ENCODE measurements at regions of chr4 and their contacts with region 1.

Region 1: DNA sequence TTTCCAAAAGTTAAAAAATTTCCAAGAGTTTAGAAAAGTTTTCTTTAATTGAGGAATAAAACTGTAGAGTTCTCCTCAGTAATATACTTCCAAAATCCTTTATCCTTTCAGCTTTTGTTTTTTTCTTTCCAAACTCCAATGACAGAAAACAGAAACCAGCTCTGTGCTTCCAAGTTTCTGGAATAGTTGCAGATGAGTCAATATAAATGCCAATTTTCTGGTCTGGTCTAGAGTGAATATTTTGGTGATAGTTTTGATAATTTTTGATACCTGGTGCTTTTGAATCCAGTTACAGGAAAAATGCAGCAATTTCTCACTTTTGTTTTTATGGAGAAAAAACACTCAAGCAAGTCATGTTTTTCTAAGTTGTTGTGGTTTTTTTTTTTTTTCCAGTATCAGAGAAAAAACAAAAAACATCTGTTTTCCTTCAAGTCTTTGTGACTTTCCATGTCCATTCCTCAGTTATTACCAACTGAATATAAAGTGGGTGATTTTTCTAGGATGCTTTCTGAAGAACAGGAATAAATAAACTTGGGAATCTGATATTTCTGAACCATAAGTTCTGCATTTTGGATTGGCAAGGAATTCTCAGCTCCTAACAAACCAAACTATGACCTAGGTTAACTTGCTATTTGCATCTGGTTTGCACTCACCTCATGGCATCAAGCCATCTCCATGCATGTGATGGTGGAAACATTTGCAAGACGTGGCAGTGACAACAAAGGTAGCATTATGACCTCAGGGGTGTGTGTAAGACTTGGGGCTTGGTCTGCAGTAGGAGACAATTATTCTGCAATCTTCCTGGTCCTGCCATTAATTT is 139.1 kb downstream of the VEGFC start:
- DNase-seq: no peak
- H3K4me3 Mint-ChIP-seq: no peak overlapping the region
- H3K27ac Mint-ChIP-seq: no peak overlapping the region
- H3K4me1 Mint-ChIP-seq: no peaks in the 10 kb centered on the region
- H3K27me3 Mint-ChIP-seq: no peaks in the 10 kb centered on the region
- CTCF ChIP-seq: no peak

Region 2: GRCh38 chr4:176856421-176856820 is 202.8 kb after region 1 on chr4:
- CTCF ChIA-PET with region 1: no interaction called
- intact Hi-C with region 1: no loop called
- DNase-seq: no peak
- H3K4me3 Mint-ChIP-seq: no peak overlapping the region
- H3K27ac Mint-ChIP-seq: no peak overlapping the region
- H3K4me1 Mint-ChIP-seq: no peaks in the 10 kb centered on the region
- H3K27me3 Mint-ChIP-seq: no peaks in the 10 kb centered on the region
- CTCF ChIP-seq: no peak

Region 3: GRCh38 chr4:177163532-177163931 is 509.9 kb after region 1 on chr4:
- CTCF ChIA-PET with region 1: no interaction called
- intact Hi-C with region 1: loop called (anchors 5 kb)
- DNase-seq: no peak
- H3K4me3 Mint-ChIP-seq: no peak overlapping the region
- H3K27ac Mint-ChIP-seq: no peak overlapping the region
- H3K4me1 Mint-ChIP-seq: no peaks in the 10 kb centered on the region
- H3K27me3 Mint-ChIP-seq: no peaks in the 10 kb centered on the region
- CTCF ChIP-seq: no peak